ENCODE measurements at regions of chrX and their contacts with region 1.

Region 1: GRCh38 chrX:36867143-36867542 is 141.0 kb upstream of the FAM47C start:
- DNase-seq: peak; percentile 5
- H3K4me3 ChIP-seq: no peak overlapping the region
- H3K27ac ChIP-seq: no peak overlapping the region
- H3K4me1 ChIP-seq: no peaks in the 10 kb centered on the region
- H3K27me3 ChIP-seq: no peaks in the 10 kb centered on the region
- CTCF ChIP-seq: peak; percentile 78
- EP300 ChIP-seq: no peak
- RAD21 ChIP-seq: peak; percentile 71

Region 2: GRCh38 chrX:35890699-35891098 is 976.4 kb before region 1 on chrX:
- CTCF ChIA-PET with region 1: interaction called, 10 read pairs
- POLR2A ChIA-PET with region 1: no interaction called
- DNase-seq: peak; percentile 38
- H3K4me3 ChIP-seq: peak overlapping the region in 1 of 2 experiments; percentile 37; a peak in 2 of 4 replicates
- H3K27ac ChIP-seq: no peak overlapping the region
- H3K4me1 ChIP-seq: no peaks in the 10 kb centered on the region
- H3K27me3 ChIP-seq: no peaks in the 10 kb centered on the region
- CTCF ChIP-seq: peak; percentile 87
- EP300 ChIP-seq: no peak
- RAD21 ChIP-seq: peak; percentile 87

Region 3: GRCh38 chrX:36849407-36849806 is 17.7 kb before region 1 on chrX:
- CTCF ChIA-PET with region 1: no interaction called
- POLR2A ChIA-PET with region 1: no interaction called
- DNase-seq: no peak
- H3K4me3 ChIP-seq: no peak overlapping the region
- H3K27ac ChIP-seq: no peak overlapping the region
- H3K4me1 ChIP-seq: no peaks in the 10 kb centered on the region
- H3K27me3 ChIP-seq: no peaks in the 10 kb centered on the region
- CTCF ChIP-seq: no peak
- EP300 ChIP-seq: no peak
- RAD21 ChIP-seq: no peak

Region 4: DNA sequence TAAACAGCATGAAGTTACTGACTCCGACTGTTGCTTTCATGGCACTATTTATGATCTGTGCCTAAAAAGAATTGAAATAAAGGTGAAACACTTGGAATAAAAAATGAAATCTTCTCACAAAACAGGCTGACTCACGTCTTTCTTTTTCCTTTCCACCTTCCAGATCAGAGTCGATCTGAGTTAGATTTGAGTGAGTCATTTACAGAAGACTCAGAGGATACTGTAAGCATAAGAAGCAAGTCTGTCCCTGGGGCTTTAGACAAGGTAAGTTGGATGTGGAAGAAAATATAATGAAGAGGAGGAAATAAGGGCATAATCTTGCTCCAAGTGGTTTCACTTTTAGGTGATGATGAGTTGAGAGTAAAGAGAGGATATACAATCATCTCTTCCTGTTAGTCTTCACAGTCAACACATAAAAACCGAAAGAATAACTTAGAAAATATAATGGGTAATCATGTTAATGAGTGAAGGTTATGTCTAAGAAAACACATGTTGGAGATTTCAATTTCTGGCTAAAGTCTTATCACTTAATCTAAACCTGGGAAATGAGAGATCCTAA is 1228.9 kb after region 1 on chrX:
- CTCF ChIA-PET with region 1: no interaction called
- POLR2A ChIA-PET with region 1: no interaction called
- DNase-seq: no peak
- H3K4me3 ChIP-seq: no peak overlapping the region; a peak in 1 of 4 replicates
- H3K27ac ChIP-seq: peak overlapping the region in 1 of 2 experiments; percentile 22; a peak in 1 of 4 replicates
- H3K4me1 ChIP-seq: no peaks in the 10 kb centered on the region
- H3K27me3 ChIP-seq: no peaks in the 10 kb centered on the region
- CTCF ChIP-seq: no peak
- EP300 ChIP-seq: no peak
- RAD21 ChIP-seq: no peak

Measured in SK-N-SH (cell line).